ENCODE measurements at regions of chr16 and their contacts with region 1.

Region 1: GRCh38 chr16:69286941-69287713 is 24.0 kb upstream of the VPS4A start:
- DNase-seq: peak; percentile 12
- H3K4me3 Mint-ChIP-seq: no peak overlapping the region
- H3K27ac Mint-ChIP-seq: no peak overlapping the region
- H3K4me1 Mint-ChIP-seq: peaks cover 5% of the 10 kb centered on the region
- H3K27me3 Mint-ChIP-seq: no peaks in the 10 kb centered on the region

Region 2: DNA sequence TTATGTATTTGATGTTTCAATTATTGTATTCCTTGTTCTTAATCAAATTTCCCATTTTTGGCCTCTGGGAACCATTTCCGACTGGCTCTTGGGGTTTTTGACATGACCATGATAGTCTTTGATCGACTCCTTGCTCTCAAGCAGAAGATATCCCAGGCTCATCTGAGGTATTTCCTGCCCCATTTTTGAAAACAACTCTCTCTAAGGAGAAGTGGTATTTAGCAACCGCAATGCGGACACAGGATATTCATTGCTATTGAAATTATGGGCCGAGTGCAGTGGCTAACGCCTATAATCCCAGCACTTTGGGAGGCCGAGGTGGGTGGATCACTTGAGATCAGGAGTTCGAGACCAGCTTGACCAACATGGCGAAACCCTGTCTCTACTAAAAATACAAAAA is 438.3 kb before region 1 on chr16:
- intact Hi-C with region 1: loop called (anchors 5 kb)
- DNase-seq: no peak
- H3K4me3 Mint-ChIP-seq: no peak overlapping the region
- H3K27ac Mint-ChIP-seq: no peak overlapping the region
- H3K4me1 Mint-ChIP-seq: peaks cover 20% of the 10 kb centered on the region
- H3K27me3 Mint-ChIP-seq: no peaks in the 10 kb centered on the region

Region 3: GRCh38 chr16:69150146-69150865 is 136.8 kb before region 1 on chr16:
- intact Hi-C with region 1: loop called (anchors 1 kb)
- DNase-seq: peak; percentile 34
- H3K4me3 Mint-ChIP-seq: no peak overlapping the region
- H3K27ac Mint-ChIP-seq: no peak overlapping the region
- H3K4me1 Mint-ChIP-seq: no peaks in the 10 kb centered on the region
- H3K27me3 Mint-ChIP-seq: no peaks in the 10 kb centered on the region

Measured in activated T-helper 1 cell treated with anti-CD3 and anti-CD28 coated beads, Interleukin-12 subunit alpha, Interleukin-12 subunit beta, Interleukin-2, Interleukin-4 antibody, amounts not matched to agents 30 ng/mL and 10 ng/mL and 1 ng/mL, durations not matched to agents 14 hours and 24 hours and 36 hours (primary cell).